HEK293T (cell line): ENCODE measurements at regions of chr1 and their contacts with region 1.

Region 1: DNA sequence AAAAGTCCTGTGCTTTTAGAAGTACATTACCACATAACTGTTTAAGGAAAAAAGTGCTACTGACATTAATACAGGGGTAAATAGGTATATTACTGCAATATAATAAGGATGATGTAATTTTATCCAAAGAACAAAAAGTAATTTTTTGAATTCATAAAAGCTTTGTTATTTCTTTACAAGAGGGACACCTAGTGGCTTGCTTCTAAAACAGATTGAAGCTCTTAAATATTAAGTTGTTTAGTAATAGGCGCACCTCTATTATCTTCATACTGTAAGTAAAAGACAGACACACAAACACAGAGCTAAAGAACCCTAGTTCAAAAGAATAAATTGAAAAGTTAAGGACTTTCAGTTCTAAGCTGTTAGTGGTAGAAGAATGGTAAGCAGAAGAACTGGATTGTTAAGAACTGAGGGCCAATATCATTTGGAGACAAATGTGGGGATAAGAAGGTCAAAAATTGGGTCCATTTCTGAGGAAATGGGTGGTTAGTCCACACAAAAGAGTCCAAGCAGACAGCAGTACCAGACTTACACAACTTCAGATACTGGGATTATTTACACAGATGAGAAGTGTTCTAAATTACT is 15.4 kb downstream of the ZNHIT6 start:
- DNase-seq: no peak

Region 2: GRCh38 chr1:85707990-85708828 is 15.4 kb after region 1 on chr1 and contains the start of gene ZNHIT6:
- CTCF ChIA-PET with region 1: interaction called, 3 read pairs
- POLR2A ChIA-PET with region 1: interaction called, 16 read pairs
- DNase-seq: peak; percentile 91